Heart left ventricle (tissue), 16 donors: ENCODE measurements at regions of chr18 and their contacts with region 1.

Region 1: DNA sequence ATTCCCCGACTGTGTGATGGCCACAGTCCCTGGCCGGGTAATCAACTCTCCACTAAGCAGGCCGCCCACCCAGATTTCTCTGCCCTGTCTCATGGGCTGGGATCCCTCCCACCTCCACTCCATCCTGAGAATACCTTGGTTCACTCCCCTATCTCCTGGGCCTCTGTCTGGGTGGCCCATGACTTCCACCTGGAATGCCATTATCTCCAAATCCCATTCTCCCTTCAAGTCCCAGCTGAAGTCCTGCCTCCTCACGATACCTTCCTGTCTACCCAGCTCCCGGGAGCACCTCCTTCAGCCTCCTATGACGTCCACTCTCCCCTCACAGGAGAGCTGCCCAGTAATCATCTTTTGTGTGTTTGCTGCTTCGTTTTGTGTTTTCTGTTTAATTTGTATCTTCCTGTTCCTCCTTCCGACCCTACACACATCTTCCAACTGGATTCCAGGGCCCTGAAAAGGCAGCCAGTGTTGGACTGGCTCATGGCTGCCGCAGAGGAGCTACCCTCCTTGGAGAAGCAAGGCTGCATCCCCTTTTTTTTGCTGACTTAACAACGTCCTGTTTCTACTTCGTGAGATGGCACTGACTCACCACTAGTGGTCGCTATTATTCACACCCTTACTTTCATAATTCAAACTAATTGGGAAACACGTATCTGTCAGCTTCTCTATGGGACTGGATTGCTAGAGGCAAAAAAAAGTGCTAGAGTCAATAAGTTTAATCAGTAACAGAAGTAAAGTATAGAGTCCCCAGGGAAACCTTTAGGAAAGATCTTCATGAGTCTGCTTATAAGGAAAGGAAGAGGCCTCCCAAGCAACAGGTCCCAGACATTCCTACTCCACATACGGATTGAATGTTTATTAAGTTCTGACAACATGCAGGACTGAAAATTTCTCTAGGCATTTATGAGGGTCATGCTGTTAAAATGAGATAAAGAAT is 171.9 kb upstream of the GATA6 start:
- DNase-seq: no peak
- ATAC-seq: peak; percentile 62 to 77 (median 70)
- H3K4me3 ChIP-seq: no peak overlapping the region
- H3K27ac ChIP-seq: peak overlapping the region in 9 of 12 donors; percentile 42 to 88 (median 67)
- H3K4me1 ChIP-seq: peaks cover 0 to 26% (median 10%) of the 10 kb centered on the region in 12 donors
- H3K27me3 ChIP-seq: no peaks in the 10 kb centered on the region
- CTCF ChIP-seq: peak; percentile 73 to 91 (median 82)
- POLR2A ChIP-seq: no peak

Region 2: DNA sequence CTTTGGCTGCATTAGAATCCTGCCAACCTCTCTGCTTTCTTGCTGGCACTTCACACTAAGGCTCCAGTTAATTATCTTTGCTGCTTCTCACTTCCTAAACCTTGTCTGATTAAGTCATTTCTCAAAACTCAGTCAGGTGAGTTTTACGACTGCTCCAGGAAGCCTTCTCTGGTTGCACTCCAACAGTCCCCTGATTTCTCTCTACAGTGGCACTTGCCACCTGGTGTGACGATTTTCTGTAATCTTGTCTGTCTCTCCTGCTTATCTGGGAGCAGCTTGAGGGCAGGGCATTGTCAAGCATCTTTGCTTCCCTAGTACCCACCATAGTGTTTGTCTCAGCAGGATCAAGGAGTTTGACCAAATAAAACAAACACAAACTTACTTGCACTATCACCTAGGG is 161.5 kb after region 1 on chr18:
- intact Hi-C with region 1: loop called in 3 of 10 experiments (anchors 2 to 5 kb)
- DNase-seq: no peak
- ATAC-seq: no peak
- H3K4me3 ChIP-seq: no peak overlapping the region
- H3K27ac ChIP-seq: no peak overlapping the region
- H3K4me1 ChIP-seq: peaks cover 0 to 20% (median 3%) of the 10 kb centered on the region in 12 donors
- H3K27me3 ChIP-seq: peaks cover 0 to 18% (median 0%) of the 10 kb centered on the region in 9 donors
- CTCF ChIP-seq: no peak
- POLR2A ChIP-seq: no peak

Region 3: GRCh38 chr18:22363867-22364463 is 366.5 kb after region 1 on chr18:
- intact Hi-C with region 1: loop called in 2 of 10 experiments (anchors 10 kb)
- DNase-seq: no peak
- ATAC-seq: peak; percentile 47 to 80 (median 73)
- H3K4me3 ChIP-seq: no peak overlapping the region
- H3K27ac ChIP-seq: no peak overlapping the region
- H3K4me1 ChIP-seq: peaks cover 0 to 9% (median 0%) of the 10 kb centered on the region in 12 donors
- H3K27me3 ChIP-seq: no peaks in the 10 kb centered on the region
- CTCF ChIP-seq: peak in 11 of 12 donors; percentile 12 to 59 (median 47)
- POLR2A ChIP-seq: no peak

Region 4: DNA sequence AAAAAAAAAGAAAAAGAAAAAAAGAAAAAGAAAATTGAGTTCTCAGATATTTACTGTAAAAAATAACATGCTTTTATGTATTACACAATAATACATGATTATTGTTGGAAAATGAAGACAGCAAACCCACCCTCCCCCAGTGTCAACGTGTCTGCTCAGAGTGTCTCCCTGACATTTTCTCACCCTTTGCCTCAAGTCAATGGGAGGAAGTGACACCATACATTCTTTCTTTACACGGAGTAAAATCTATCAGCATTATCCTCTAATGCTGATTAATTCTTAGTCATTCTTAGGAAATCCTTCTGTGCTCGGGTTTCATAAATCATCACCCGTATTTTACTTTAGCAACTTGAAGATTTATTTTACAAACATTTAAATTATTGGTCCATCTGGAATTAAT is 388.2 kb after region 1 on chr18:
- intact Hi-C with region 1: loop called in 1 of 10 experiments (anchors 10 kb)
- DNase-seq: no peak
- ATAC-seq: peak in 1 of 4 donors; percentile 33
- H3K4me3 ChIP-seq: no peak overlapping the region
- H3K27ac ChIP-seq: no peak overlapping the region
- H3K4me1 ChIP-seq: peaks cover 0 to 16% (median 5%) of the 10 kb centered on the region in 12 donors
- H3K27me3 ChIP-seq: no peaks in the 10 kb centered on the region
- CTCF ChIP-seq: no peak
- POLR2A ChIP-seq: no peak

Region 5: GRCh38 chr18:22412176-22412908 is 414.9 kb after region 1 on chr18:
- intact Hi-C with region 1: no loop called
- DNase-seq: no peak
- ATAC-seq: no peak
- H3K4me3 ChIP-seq: no peak overlapping the region
- H3K27ac ChIP-seq: no peak overlapping the region
- H3K4me1 ChIP-seq: peaks cover 0 to 7% (median 0%) of the 10 kb centered on the region in 12 donors
- H3K27me3 ChIP-seq: no peaks in the 10 kb centered on the region
- CTCF ChIP-seq: no peak
- POLR2A ChIP-seq: no peak